Natural killer cell (primary cell): ENCODE measurements at regions of chr3 and their contacts with region 1.

Region 1: DNA sequence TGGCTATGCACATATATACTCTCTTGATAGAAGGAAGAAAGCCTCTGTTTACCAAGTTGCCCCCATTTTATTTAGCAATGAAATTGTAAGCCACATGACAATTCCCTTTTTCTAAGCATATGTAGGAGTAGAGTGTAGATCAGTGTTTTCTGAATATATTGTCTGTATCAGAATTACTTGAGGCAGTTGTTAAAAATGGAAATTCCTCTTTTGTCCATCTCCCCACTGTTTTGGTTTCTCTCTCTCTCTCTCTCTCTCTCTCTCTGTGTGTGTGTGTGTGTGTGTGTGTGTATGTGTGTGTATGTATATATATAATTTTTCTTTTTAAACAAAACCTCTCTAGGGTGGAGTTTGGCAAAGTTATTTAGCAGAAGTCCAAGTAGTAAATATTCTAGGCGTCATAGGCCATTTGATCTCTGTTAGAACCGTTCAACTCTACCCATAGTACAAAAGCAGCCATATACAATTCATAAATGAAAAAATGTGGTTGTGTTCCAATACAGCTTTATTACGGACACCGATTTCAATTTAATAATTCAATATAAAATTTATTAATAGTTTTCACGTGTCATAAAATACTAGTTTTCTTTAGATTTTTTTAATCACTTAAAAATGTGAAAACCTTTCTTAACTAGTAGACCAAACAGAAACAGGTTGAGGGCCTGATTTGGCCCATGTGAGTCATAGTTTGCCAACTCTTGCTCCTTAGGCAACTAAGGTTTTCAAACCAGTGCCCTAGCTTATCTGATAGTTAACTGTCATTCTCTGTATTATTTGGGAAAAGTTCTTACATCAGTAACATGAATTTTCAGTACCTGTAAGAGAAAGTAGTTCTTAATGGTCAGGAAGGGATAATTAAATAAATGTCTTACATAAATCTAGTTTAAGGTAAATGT is 39.8 kb downstream of the UBE2E1 start:
- DNase-seq: no peak
- ATAC-seq: no peak
- H3K4me3 ChIP-seq: no peak overlapping the region
- H3K4me3 Mint-ChIP-seq: no peak overlapping the region
- H3K27ac ChIP-seq: no peak overlapping the region
- H3K27ac Mint-ChIP-seq: no peak overlapping the region
- H3K4me1 ChIP-seq: no peaks in the 10 kb centered on the region
- H3K4me1 Mint-ChIP-seq: peaks cover 22 to 29% of the 10 kb centered on the region in 2 donors
- H3K27me3 ChIP-seq: no peaks in the 10 kb centered on the region
- H3K27me3 Mint-ChIP-seq: no peaks in the 10 kb centered on the region
- CTCF ChIP-seq: no peak

Region 2: DNA sequence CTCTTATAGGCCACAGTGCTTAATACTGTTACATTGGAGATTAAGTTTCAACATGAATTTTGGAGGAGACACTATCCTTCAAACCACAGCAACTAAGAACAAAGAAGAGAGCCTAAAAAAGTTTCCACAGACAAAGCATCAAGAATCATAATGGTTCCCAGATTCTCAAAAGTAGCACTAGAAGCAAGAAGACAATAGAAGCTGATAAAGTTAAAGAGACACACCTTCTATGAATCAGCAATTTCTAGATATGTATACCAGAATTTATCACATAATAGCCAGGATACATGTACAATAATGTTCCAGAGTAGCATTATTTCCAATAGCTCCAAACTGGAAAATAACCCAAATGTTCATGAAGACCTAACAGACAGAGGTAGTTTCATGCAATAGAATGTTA is 59.0 kb after region 1 on chr3:
- intact Hi-C with region 1: loop called (anchors 2 kb)
- DNase-seq: no peak
- ATAC-seq: no peak
- H3K4me3 ChIP-seq: no peak overlapping the region
- H3K4me3 Mint-ChIP-seq: no peak overlapping the region
- H3K27ac ChIP-seq: no peak overlapping the region
- H3K27ac Mint-ChIP-seq: no peak overlapping the region
- H3K4me1 ChIP-seq: no peaks in the 10 kb centered on the region
- H3K4me1 Mint-ChIP-seq: no peaks in the 10 kb centered on the region
- H3K27me3 ChIP-seq: no peaks in the 10 kb centered on the region
- H3K27me3 Mint-ChIP-seq: no peaks in the 10 kb centered on the region
- CTCF ChIP-seq: no peak